Gastrocnemius medialis (tissue), 4 donors: ENCODE measurements at regions of chr7 and their contacts with region 1.

Region 1: GRCh38 chr7:74449809-74450397 is 3.8 kb upstream of the GTF2IRD1 start:
- DNase-seq: peak in 1 of 2 donors; percentile 11
- ATAC-seq: peak in 1 of 2 donors; percentile 32
- H3K4me3 ChIP-seq: no peak overlapping the region
- H3K27ac ChIP-seq: peak overlapping the region in 1 of 4 donors; percentile 21
- H3K4me1 ChIP-seq: peaks cover 0 to 9% of the 10 kb centered on the region in 2 donors
- H3K27me3 ChIP-seq: no peaks in the 10 kb centered on the region
- CTCF ChIP-seq: peak; percentile 56 to 88 (median 83)
- POLR2A ChIP-seq: no peak

Region 2: DNA sequence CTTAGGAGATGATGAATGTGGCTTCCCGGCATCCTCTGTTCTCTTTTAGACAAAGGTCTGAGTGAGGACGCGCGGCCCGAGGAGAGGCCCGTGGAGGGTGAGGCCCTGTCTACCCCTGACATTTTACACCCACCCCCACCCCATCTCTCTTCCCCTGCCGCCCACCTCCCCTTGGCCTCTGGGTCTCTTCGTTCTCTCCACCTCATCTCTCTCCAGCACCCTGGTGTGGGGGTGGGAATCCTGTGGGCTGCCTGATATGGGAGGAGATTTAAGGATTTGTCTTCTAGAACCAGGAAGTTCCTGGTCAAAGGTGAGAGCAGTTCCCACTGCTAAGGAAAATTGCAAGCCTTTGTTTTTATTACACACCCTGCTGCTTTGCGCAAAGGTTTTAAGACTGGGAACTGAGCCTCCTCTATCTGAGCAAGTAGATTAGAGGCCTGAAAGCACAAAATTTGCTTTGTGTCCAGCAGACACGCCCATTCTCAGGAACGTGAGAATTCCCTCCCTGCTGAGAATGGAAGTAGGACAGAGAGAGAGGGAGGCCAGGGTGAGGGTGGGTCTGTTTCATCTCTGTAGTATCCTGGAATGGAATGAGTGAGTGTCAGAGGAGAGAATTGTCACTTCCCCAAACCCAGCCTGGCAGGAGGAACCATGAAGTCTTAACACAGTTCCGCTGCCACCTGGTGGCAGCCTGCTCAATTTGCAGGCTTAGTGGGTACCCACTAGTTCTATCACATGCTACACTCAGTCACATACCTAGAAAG is 95.0 kb after region 1 on chr7:
- in situ Hi-C with region 1: loop called in 1 of 4 experiments (anchors 25 kb)
- intact Hi-C with region 1: no loop called
- DNase-seq: peak in 1 of 2 donors; percentile 50
- ATAC-seq: peak in 1 of 2 donors; percentile 55
- H3K4me3 ChIP-seq: no peak overlapping the region
- H3K27ac ChIP-seq: peak overlapping the region in 1 of 4 donors; percentile 46
- H3K4me1 ChIP-seq: peaks cover 4 to 7% of the 10 kb centered on the region in 2 donors
- H3K27me3 ChIP-seq: no peaks in the 10 kb centered on the region
- CTCF ChIP-seq: peak in 4 of 5 experiments; percentile 38 to 49 (median 43)
- POLR2A ChIP-seq: no peak

Region 3: DNA sequence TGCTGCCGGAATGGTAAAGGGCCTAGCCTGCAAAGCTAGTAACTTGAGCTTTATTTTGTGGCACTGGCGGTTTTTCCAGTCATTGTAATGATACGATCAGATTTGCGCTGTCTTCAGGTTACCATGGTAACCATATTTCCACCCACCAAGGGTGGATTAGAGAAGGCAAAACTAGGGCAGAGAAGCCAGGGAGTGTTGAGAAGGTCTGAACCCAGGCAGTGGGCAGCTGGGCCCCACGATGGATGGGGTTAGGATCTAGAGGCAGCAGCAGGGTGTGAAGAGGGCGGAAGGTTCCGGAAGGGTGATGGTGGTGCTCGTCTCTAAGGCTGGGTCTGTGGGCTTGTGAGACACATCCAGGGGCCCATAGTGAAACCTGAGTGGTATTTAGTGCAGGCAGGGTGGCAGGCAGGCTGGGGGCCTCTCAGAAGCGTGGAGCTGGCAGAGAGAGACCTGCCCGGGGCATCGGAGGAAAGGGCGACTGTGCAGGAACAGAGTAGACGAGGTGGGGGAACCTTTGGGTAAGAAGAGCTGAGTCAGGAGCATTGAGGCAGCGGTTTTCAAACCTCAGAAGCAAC is 119.7 kb after region 1 on chr7:
- in situ Hi-C with region 1: no loop called
- intact Hi-C with region 1: loop called (anchors 2 kb)
- DNase-seq: no peak
- ATAC-seq: no peak
- H3K4me3 ChIP-seq: no peak overlapping the region
- H3K27ac ChIP-seq: peak overlapping the region in 3 of 4 donors; percentile 27 to 54 (median 45)
- H3K4me1 ChIP-seq: no peaks in the 10 kb centered on the region
- H3K27me3 ChIP-seq: no peaks in the 10 kb centered on the region
- CTCF ChIP-seq: no peak
- POLR2A ChIP-seq: no peak

Region 4: DNA sequence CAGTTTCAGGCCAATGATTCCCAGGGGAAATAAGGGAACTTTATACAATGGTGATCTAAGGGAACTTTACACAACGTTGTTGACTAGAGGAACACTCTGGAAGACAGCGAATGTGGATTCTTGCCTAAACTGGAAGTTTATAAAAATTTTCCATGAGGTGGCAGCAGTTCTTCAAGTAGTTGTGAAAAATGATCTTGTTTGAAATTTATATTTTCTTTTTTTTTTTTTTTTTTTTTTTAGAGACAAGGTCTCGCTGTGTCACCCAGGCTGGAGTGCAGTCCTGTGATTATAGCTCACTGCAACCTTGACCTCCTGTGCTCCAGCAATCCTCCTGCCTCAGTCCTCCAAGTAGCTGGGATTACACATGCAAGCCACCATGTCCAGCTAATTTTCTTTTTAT is 175.5 kb after region 1 on chr7:
- in situ Hi-C with region 1: no loop called
- intact Hi-C with region 1: no loop called
- DNase-seq: no peak
- ATAC-seq: peak in 1 of 2 donors; percentile 27
- H3K4me3 ChIP-seq: no peak overlapping the region
- H3K27ac ChIP-seq: no peak overlapping the region
- H3K4me1 ChIP-seq: peaks cover 14 to 15% of the 10 kb centered on the region in 2 donors
- H3K27me3 ChIP-seq: no peaks in the 10 kb centered on the region
- CTCF ChIP-seq: peak in 1 of 5 experiments; percentile 9
- POLR2A ChIP-seq: no peak

Region 5: DNA sequence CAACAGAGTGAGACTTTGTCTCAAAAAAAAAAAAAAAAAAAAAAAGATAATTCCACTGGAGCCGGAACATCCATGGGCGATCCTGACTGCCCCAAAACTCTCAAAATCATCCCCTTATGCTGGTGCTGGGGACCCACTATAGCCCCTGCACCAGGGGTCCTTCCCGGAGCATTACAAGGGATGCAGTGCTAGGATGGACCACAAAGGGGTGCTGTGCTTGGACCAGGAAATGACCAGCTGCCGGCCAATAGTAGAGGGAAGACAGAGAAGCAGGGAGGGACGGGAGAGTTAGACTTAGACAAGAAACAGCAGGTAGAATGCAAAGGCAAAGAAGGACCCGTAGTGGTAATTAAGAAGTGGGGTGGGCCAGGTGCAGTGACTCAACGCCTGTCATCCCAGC is 583.1 kb after region 1 on chr7:
- in situ Hi-C with region 1: loop called in 1 of 4 experiments (anchors 25 kb)
- intact Hi-C with region 1: no loop called
- DNase-seq: no peak
- ATAC-seq: peak; percentile 22 to 27
- H3K4me3 ChIP-seq: no peak overlapping the region
- H3K27ac ChIP-seq: no peak overlapping the region
- H3K4me1 ChIP-seq: no peaks in the 10 kb centered on the region
- H3K27me3 ChIP-seq: no peaks in the 10 kb centered on the region
- CTCF ChIP-seq: no peak
- POLR2A ChIP-seq: no peak